ENCODE measurements at regions of chr12 and their contacts with region 1.

Region 1: DNA sequence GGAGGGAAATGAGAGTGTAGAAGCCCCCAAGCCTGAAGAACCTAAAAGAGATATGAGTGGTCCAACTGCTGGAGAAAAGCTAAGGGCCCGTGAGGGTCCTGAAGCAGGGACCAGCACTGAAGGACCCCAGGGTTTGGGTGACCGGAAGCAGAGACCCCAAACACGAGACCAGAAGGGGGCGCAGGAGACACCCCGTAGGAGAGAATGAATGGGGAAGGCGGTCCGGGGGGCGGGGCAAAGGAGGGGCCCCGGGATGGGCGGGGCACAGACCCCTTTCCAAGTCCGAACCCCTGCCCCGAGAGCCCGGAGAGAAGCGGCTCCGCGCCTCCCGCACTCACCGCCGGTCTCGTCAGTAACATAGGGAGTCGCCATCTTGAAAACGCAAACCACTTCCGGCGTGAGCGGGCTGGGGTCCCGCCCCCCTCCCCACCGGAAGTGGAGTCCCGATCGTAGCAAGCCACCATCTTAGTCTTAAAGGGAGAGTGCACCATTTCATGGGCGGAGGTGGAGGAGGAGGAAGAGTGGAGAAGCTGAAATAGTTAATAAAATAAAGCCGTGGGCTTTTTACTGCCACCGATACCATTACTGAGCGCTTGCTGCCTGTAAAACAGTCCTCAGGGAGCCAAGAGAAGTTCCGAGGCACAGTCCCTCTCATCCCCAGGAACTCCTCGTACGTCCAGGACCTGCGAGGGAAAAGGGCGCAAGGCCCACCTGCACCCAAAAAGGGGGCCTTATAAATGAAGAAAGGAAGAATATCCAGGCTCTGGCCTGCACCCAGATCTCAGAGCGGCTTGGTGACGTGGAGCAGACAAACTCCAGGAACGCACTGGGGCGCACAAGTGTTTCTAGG is 731 bp downstream of the PYM1 start:
- DNase-seq: peak; percentile 81
- ATAC-seq: peak; percentile 65
- H3K4me3 ChIP-seq: peak overlapping the region; percentile 93
- H3K27ac ChIP-seq: peak overlapping the region; percentile 96
- H3K4me1 ChIP-seq: peaks cover 3% of the 10 kb centered on the region; the same call in 1 of the 2 replicates
- H3K27me3 ChIP-seq: no peaks in the 10 kb centered on the region
- CTCF ChIP-seq: peak; percentile 73 to 79 (median 73)
- EP300 ChIP-seq: peak; percentile 25 to 45; a peak in 1 of 4 replicates
- POLR2A ChIP-seq: peak; percentile 80
- RAD21 ChIP-seq: peak; percentile 38

Region 2: GRCh38 chr12:55817346-55818139 is 109.4 kb before region 1 on chr12 and contains the starts of genes ORMDL2 and SARNP:
- CTCF ChIA-PET with region 1: interaction called, 11 read pairs
- POLR2A ChIA-PET with region 1: interaction called, 19 read pairs
- RAD21 ChIA-PET with region 1: interaction called, 14 read pairs
- SMC1A ChIA-PET with region 1: interaction called, 15 read pairs
- in situ Hi-C with region 1: no loop called
- intact Hi-C with region 1: loop called (anchors 2 kb)
- DNase-seq: peak; percentile 100
- ATAC-seq: peak; percentile 98
- H3K4me3 ChIP-seq: peak within 1 kb of the TSS; percentile 85
- H3K27ac ChIP-seq: peak within 1 kb of the TSS; percentile 92
- H3K4me1 ChIP-seq: peaks cover 10% of the 10 kb centered on the region; the same call in 1 of the 2 replicates
- H3K27me3 ChIP-seq: no peaks in the 10 kb centered on the region
- CTCF ChIP-seq: no peak
- EP300 ChIP-seq: no peak
- POLR2A ChIP-seq: peak; percentile 86
- RAD21 ChIP-seq: no peak
- polyA plus RNA-seq, gene ORMDL2: 123 to 135 TPM
- polyA plus RNA-seq, gene SARNP: 419 to 445 TPM

Region 3: GRCh38 chr12:55940065-55940732 is 13.2 kb after region 1 on chr12:
- CTCF ChIA-PET with region 1: interaction called, 57 read pairs
- POLR2A ChIA-PET with region 1: interaction called, 6 read pairs
- RAD21 ChIA-PET with region 1: interaction called, 25 read pairs
- SMC1A ChIA-PET with region 1: interaction called, 24 read pairs
- in situ Hi-C with region 1: no loop called
- intact Hi-C with region 1: no loop called
- DNase-seq: peak; percentile 60
- ATAC-seq: peak; percentile 100
- H3K4me3 ChIP-seq: no peak overlapping the region
- H3K27ac ChIP-seq: no peak overlapping the region
- H3K4me1 ChIP-seq: peaks cover 10% of the 10 kb centered on the region
- H3K27me3 ChIP-seq: no peaks in the 10 kb centered on the region
- CTCF ChIP-seq: peak; percentile 91 to 95 (median 94); a peak in 5 of 6 replicates
- EP300 ChIP-seq: no peak
- POLR2A ChIP-seq: no peak
- RAD21 ChIP-seq: peak; percentile 82

Region 4: GRCh38 chr12:55982319-55982936 is 55.5 kb after region 1 on chr12:
- CTCF ChIA-PET with region 1: interaction called, 6 read pairs
- POLR2A ChIA-PET with region 1: interaction called, 10 read pairs
- RAD21 ChIA-PET with region 1: interaction called, 3 read pairs
- SMC1A ChIA-PET with region 1: interaction called, 8 read pairs
- in situ Hi-C with region 1: no loop called
- intact Hi-C with region 1: no loop called
- DNase-seq: peak; percentile 60
- ATAC-seq: peak; percentile 96
- H3K4me3 ChIP-seq: 0 out of 2 replicates have a peak overlapping the region, but pooled peaks have one; percentile 12
- H3K27ac ChIP-seq: peak overlapping the region; percentile 38
- H3K4me1 ChIP-seq: peaks cover 16% of the 10 kb centered on the region
- H3K27me3 ChIP-seq: no peaks in the 10 kb centered on the region
- CTCF ChIP-seq: no peak
- EP300 ChIP-seq: no peak
- POLR2A ChIP-seq: no peak
- RAD21 ChIP-seq: no peak

Region 5: DNA sequence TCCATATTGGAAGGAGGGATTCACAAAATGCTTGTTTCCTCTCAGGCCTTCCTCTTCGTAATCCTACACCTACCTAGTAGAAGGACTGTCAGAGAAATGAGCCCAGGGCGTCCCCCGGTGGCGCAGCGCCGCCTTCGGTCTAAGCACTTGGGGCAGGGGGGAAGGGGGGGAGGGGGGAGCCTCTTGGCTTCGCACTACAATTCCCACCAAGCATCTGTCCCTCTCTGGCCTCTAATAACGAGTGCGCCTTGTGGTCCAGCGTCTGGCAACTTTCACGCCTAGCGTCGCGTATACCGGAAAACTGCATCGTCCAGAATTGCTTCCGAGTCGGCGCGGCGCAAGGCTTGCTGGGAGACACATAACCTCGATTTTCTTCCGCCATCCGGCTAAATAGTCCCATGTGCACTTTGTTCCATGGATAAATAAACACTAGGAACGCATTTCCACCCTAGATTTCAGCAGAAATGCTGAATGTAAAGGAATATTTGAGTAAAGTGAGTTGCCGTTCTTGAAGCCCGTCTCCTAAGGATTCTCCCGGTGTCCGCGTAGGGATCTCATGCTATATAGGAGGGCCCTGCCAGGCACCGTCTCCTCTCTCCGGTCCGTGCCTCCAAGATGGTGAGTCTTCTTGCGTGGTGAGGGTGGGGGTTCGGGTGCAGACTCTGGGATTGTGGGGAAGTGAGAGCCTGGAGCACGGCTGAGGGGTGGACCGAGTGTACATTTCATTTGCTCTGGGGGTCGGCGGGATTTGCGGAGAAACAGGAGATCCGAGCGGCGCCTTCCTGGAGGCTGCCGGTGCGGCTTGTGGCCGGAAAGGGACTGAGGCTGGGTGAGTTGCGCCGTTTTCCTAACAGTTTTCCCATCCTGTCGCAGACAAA is 114.8 kb after region 1 on chr12 and contains the start of gene RPS26:
- CTCF ChIA-PET with region 1: interaction called, 14 read pairs
- POLR2A ChIA-PET with region 1: interaction called, 3 read pairs
- RAD21 ChIA-PET with region 1: interaction called, 4 read pairs
- SMC1A ChIA-PET with region 1: interaction called, 4 read pairs
- in situ Hi-C with region 1: no loop called
- intact Hi-C with region 1: loop called (anchors 1 kb)
- DNase-seq: peak; percentile 98
- ATAC-seq: peak; percentile 96
- H3K4me3 ChIP-seq: peak within 1 kb of the TSS; percentile 98
- H3K27ac ChIP-seq: peak within 1 kb of the TSS; percentile 98
- H3K4me1 ChIP-seq: peaks cover 13% of the 10 kb centered on the region
- H3K27me3 ChIP-seq: no peaks in the 10 kb centered on the region
- CTCF ChIP-seq: peak; percentile 46 to 64 (median 61)
- EP300 ChIP-seq: peak in 1 of 2 experiments; percentile 60; a peak in 2 of 4 replicates
- POLR2A ChIP-seq: peak; percentile 100
- RAD21 ChIP-seq: peak; percentile 85
- polyA plus RNA-seq, gene RPS26: 2,920 to 3,147 TPM

Measured in GM12878 (cell line).